ENCODE measurements at regions of chr4 and their contacts with region 1.

Region 1: DNA sequence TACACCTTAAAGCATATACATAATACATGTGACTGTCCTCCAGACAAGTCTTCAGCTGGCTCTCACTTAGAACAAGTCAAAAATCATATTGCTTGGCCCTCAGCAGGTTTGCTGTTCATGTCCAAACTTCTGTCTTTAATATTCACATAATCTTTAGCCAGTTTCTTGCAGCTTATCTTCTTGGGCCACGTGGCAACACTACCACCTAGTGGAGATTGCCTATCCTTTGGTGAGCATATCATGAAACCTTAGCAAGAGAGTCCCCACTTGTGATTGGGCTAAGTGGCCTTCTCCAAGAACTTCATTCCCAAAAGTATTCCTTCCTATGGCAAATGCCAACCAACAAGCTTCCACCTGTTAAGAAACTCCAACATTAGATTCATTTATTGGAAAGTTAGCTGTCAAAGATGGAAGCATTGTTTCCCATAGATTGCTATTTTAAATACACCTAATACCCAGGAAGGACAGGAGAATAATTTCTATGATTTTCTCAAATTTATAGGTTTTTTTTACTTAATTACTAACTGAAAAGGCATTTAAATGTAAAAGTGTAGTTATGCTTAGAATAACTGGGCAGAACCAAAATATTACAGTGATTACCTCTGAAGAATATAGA is 231.9 kb upstream of the INTU start:
- DNase-seq: peak; percentile 71 to 72
- H3K4me3 ChIP-seq: no peak overlapping the region
- H3K4me3 Mint-ChIP-seq: no peak overlapping the region
- H3K27ac Mint-ChIP-seq: no peak overlapping the region
- H3K4me1 ChIP-seq: no peaks in the 10 kb centered on the region
- H3K4me1 Mint-ChIP-seq: no peaks in the 10 kb centered on the region
- H3K27me3 ChIP-seq: no peaks in the 10 kb centered on the region
- H3K27me3 Mint-ChIP-seq: peaks cover 4% of the 10 kb centered on the region
- CTCF ChIP-seq: peak; percentile 58 to 82

Region 2: GRCh38 chr4:126592088-126592487 is 808.8 kb before region 1 on chr4:
- CTCF ChIA-PET with region 1: no interaction called
- POLR2A ChIA-PET with region 1: no interaction called
- intact Hi-C with region 1: loop called (anchors 2 kb)
- DNase-seq: no peak
- H3K4me3 ChIP-seq: no peak overlapping the region
- H3K4me3 Mint-ChIP-seq: no peak overlapping the region
- H3K27ac Mint-ChIP-seq: no peak overlapping the region
- H3K4me1 ChIP-seq: no peaks in the 10 kb centered on the region
- H3K4me1 Mint-ChIP-seq: no peaks in the 10 kb centered on the region
- H3K27me3 ChIP-seq: no peaks in the 10 kb centered on the region
- H3K27me3 Mint-ChIP-seq: no peaks in the 10 kb centered on the region
- CTCF ChIP-seq: peak; percentile 28 to 48

Region 3: GRCh38 chr4:126627255-126627654 is 773.6 kb before region 1 on chr4:
- CTCF ChIA-PET with region 1: no interaction called
- POLR2A ChIA-PET with region 1: no interaction called
- intact Hi-C with region 1: loop called (anchors 10 kb)
- DNase-seq: peak in 1 of 2 experiments; percentile 12
- H3K4me3 ChIP-seq: no peak overlapping the region
- H3K4me3 Mint-ChIP-seq: no peak overlapping the region
- H3K27ac Mint-ChIP-seq: no peak overlapping the region
- H3K4me1 ChIP-seq: no peaks in the 10 kb centered on the region
- H3K4me1 Mint-ChIP-seq: no peaks in the 10 kb centered on the region
- H3K27me3 ChIP-seq: no peaks in the 10 kb centered on the region
- H3K27me3 Mint-ChIP-seq: no peaks in the 10 kb centered on the region
- CTCF ChIP-seq: peak in 1 of 2 experiments; percentile 16

Region 4: DNA sequence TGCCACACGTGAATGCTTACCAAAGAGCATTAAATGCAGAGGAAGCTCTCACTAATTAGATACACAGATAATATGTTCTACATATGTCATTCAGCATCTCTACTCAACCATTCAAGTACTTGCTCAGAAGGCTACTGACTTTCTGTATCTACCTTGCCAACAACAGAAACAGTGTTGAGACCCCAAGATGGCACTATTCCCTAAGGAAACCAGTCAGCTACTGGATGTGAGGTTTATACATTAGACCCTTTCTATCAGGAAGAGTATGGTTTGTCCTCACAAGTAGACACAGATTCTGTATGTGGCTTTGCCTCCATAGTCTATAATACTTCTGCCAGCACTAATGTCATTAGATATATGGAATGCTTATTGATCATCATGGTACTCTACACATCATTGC is 212.0 kb before region 1 on chr4:
- CTCF ChIA-PET with region 1: no interaction called
- POLR2A ChIA-PET with region 1: no interaction called
- intact Hi-C with region 1: loop called (anchors 1 kb)
- DNase-seq: peak in 1 of 2 experiments; percentile 1
- H3K4me3 ChIP-seq: no peak overlapping the region
- H3K4me3 Mint-ChIP-seq: no peak overlapping the region
- H3K27ac Mint-ChIP-seq: no peak overlapping the region
- H3K4me1 ChIP-seq: no peaks in the 10 kb centered on the region
- H3K4me1 Mint-ChIP-seq: no peaks in the 10 kb centered on the region
- H3K27me3 ChIP-seq: no peaks in the 10 kb centered on the region
- H3K27me3 Mint-ChIP-seq: no peaks in the 10 kb centered on the region
- CTCF ChIP-seq: no peak

Region 5: GRCh38 chr4:127479031-127479622 is 78.3 kb after region 1 on chr4:
- CTCF ChIA-PET with region 1: no interaction called
- POLR2A ChIA-PET with region 1: no interaction called
- intact Hi-C with region 1: loop called (anchors 2 kb)
- DNase-seq: no peak
- H3K4me3 ChIP-seq: no peak overlapping the region
- H3K4me3 Mint-ChIP-seq: no peak overlapping the region
- H3K27ac Mint-ChIP-seq: no peak overlapping the region
- H3K4me1 ChIP-seq: no peaks in the 10 kb centered on the region
- H3K4me1 Mint-ChIP-seq: no peaks in the 10 kb centered on the region
- H3K27me3 ChIP-seq: no peaks in the 10 kb centered on the region
- H3K27me3 Mint-ChIP-seq: peaks cover 3% of the 10 kb centered on the region
- CTCF ChIP-seq: peak; percentile 39 to 58

Region 6: DNA sequence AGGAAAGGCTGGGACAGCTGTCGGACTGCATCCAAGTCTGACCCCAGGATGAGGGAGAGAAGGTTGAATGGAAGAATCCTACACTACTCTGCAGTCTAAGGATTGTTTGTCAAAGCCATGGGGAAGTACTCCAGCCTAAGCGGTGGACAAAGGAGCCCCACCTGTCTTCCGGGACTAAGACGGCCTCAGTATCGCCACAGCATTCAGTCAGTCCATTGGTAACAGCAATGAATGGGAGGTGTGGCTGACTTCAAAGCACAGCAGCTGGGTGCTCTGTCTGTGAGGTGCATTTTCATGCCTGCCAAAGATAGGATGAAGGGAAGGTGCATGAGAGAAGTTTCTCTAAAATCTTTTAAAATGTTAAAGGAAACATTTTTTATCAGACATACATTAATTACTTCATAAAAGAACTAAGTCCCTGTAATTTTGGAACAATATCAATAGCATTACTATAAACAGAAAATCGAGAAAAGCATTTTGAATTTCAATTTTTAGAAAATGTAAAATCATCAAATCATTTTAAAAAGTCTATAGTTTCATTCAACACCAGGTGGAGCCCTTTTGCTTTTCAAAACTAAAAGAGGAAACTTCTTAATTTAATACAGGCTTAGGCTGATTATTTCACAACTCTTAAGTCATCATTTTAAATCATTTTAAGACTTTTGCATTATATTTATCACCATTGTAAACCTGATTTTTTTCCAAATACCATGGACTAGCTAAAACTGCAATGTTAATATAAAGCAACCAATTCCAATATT is 204.3 kb after region 1 on chr4:
- CTCF ChIA-PET with region 1: no interaction called
- POLR2A ChIA-PET with region 1: no interaction called
- intact Hi-C with region 1: no loop called
- DNase-seq: no peak
- H3K4me3 ChIP-seq: no peak overlapping the region
- H3K4me3 Mint-ChIP-seq: no peak overlapping the region
- H3K27ac Mint-ChIP-seq: no peak overlapping the region
- H3K4me1 ChIP-seq: no peaks in the 10 kb centered on the region; the same call in 1 of the 2 replicates
- H3K4me1 Mint-ChIP-seq: no peaks in the 10 kb centered on the region
- H3K27me3 ChIP-seq: no peaks in the 10 kb centered on the region
- H3K27me3 Mint-ChIP-seq: peaks cover 2% of the 10 kb centered on the region
- CTCF ChIP-seq: peak in 1 of 2 experiments; percentile 40